Kidney (tissue), 22 donors: ENCODE measurements at regions of chr12 and their contacts with region 1.

Region 1: GRCh38 chr12:109844983-109845823 is 12.0 kb upstream of the TRPV4 start:
- DNase-seq: peak; percentile 91 to 93 (median 92)
- H3K4me3 ChIP-seq: peak overlapping the region; percentile 32 to 44 (median 41)
- H3K27ac ChIP-seq: no peak overlapping the region
- H3K4me1 ChIP-seq: peaks cover 0 to 5% (median 3%) of the 10 kb centered on the region in 3 donors
- H3K27me3 ChIP-seq: no peaks in the 10 kb centered on the region
- CTCF ChIP-seq: peak; percentile 96

Region 2: GRCh38 chr12:109804820-109805761 is 40.1 kb before region 1 on chr12:
- intact Hi-C with region 1: loop called (anchors 5 kb)
- DNase-seq: peak; percentile 57 to 80 (median 60)
- H3K4me3 ChIP-seq: no peak overlapping the region
- H3K27ac ChIP-seq: no peak overlapping the region
- H3K4me1 ChIP-seq: no peaks in the 10 kb centered on the region
- H3K27me3 ChIP-seq: no peaks in the 10 kb centered on the region
- CTCF ChIP-seq: peak; percentile 93